Tibial artery (tissue), 4 donors: ENCODE measurements at regions of chr5 and their contacts with region 1.

Region 1: GRCh38 chr5:14142827-14143548 is at the start of gene TRIO:
- DNase-seq: peak; percentile 91 to 97
- H3K4me3 ChIP-seq: peak within 1 kb of the TSS; percentile 89 to 91
- H3K27ac ChIP-seq: peak within 1 kb of the TSS; percentile 93 to 96
- H3K4me1 ChIP-seq: peaks cover 0 to 41% (median 23%) of the 10 kb centered on the region in 4 donors
- H3K27me3 ChIP-seq: no peaks in the 10 kb centered on the region
- CTCF ChIP-seq: peak; percentile 36 to 54

Region 2: GRCh38 chr5:14187660-14188059 is 44.7 kb after region 1 on chr5:
- intact Hi-C with region 1: loop called (anchors 2 kb)
- DNase-seq: no peak
- H3K4me3 ChIP-seq: no peak overlapping the region
- H3K27ac ChIP-seq: peak overlapping the region; percentile 89 to 90
- H3K4me1 ChIP-seq: peaks cover 5 to 98% (median 66%) of the 10 kb centered on the region in 4 donors
- H3K27me3 ChIP-seq: no peaks in the 10 kb centered on the region
- CTCF ChIP-seq: no peak

Region 3: GRCh38 chr5:14264604-14265316 is 121.8 kb after region 1 on chr5:
- intact Hi-C with region 1: loop called (anchors 5 kb)
- DNase-seq: peak; percentile 87 to 94
- H3K4me3 ChIP-seq: peak overlapping the region; percentile 15 to 33
- H3K27ac ChIP-seq: no peak overlapping the region
- H3K4me1 ChIP-seq: peaks cover 0 to 68% (median 50%) of the 10 kb centered on the region in 4 donors
- H3K27me3 ChIP-seq: no peaks in the 10 kb centered on the region
- CTCF ChIP-seq: no peak

Region 4: GRCh38 chr5:14286574-14287421 is 143.8 kb after region 1 on chr5:
- intact Hi-C with region 1: no loop called
- DNase-seq: no peak
- H3K4me3 ChIP-seq: no peak overlapping the region
- H3K27ac ChIP-seq: no peak overlapping the region
- H3K4me1 ChIP-seq: peaks cover 0 to 27% (median 0%) of the 10 kb centered on the region in 4 donors
- H3K27me3 ChIP-seq: no peaks in the 10 kb centered on the region
- CTCF ChIP-seq: no peak